Activated CD4-positive, alpha-beta T cell treated with anti-CD3 and anti-CD28 coated beads for 36 hours (primary cell): ENCODE measurements at regions of chr7 and their contacts with region 1.

Region 1: GRCh38 chr7:35723011-35723410 is 28.1 kb upstream of the HERPUD2 start:
- DNase-seq: peak; percentile 33
- ATAC-seq: peak; percentile 80
- H3K4me3 Mint-ChIP-seq: peak overlapping the region; percentile 32
- H3K27ac Mint-ChIP-seq: peak overlapping the region; percentile 90
- H3K4me1 Mint-ChIP-seq: peaks cover 55% of the 10 kb centered on the region
- H3K27me3 Mint-ChIP-seq: no peaks in the 10 kb centered on the region

Region 2: GRCh38 chr7:35701287-35701900 is 21.6 kb before region 1 on chr7:
- CTCF ChIA-PET with region 1: interaction called, 15 read pairs
- POLR2A ChIA-PET with region 1: interaction called, 3 read pairs
- intact Hi-C with region 1: loop called in 1 of 2 experiments (anchors 1 kb)
- DNase-seq: peak; percentile 24
- ATAC-seq: peak; percentile 56
- H3K4me3 Mint-ChIP-seq: no peak overlapping the region
- H3K27ac Mint-ChIP-seq: no peak overlapping the region
- H3K4me1 Mint-ChIP-seq: peaks cover 27% of the 10 kb centered on the region
- H3K27me3 Mint-ChIP-seq: no peaks in the 10 kb centered on the region

Region 3: GRCh38 chr7:35707422-35707821 is 15.6 kb before region 1 on chr7:
- CTCF ChIA-PET with region 1: interaction called, 13 read pairs
- POLR2A ChIA-PET with region 1: interaction called, 3 read pairs
- intact Hi-C with region 1: loop called in 1 of 2 experiments (anchors 2 kb)
- DNase-seq: no peak
- ATAC-seq: no peak
- H3K4me3 Mint-ChIP-seq: no peak overlapping the region
- H3K27ac Mint-ChIP-seq: no peak overlapping the region
- H3K4me1 Mint-ChIP-seq: peaks cover 15% of the 10 kb centered on the region
- H3K27me3 Mint-ChIP-seq: peaks cover 2% of the 10 kb centered on the region

Region 4: DNA sequence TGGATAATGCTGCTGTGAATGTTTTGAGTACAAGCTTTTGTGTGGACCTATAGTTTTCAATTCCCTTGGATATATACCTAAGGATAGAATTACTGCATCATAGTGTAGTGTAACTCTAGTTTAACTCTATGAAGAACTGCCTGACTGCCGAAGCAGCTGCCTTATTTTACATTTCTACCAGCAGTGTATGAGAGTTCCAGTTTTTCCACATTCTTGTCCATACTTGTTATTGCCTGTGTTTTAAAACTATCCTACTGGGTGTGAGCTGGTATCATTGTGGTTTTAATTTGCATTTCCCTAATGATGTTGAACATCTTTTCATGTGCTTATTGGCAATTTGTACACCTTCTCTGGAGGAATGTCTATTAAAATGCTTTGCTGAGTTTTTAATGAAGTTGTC is 93.5 kb after region 1 on chr7:
- CTCF ChIA-PET with region 1: interaction called, 3 read pairs
- POLR2A ChIA-PET with region 1: no interaction called
- intact Hi-C with region 1: loop called in 1 of 2 experiments (anchors 1 kb)
- DNase-seq: no peak
- ATAC-seq: no peak
- H3K4me3 Mint-ChIP-seq: no peak overlapping the region
- H3K27ac Mint-ChIP-seq: no peak overlapping the region
- H3K4me1 Mint-ChIP-seq: peaks cover 76% of the 10 kb centered on the region
- H3K27me3 Mint-ChIP-seq: no peaks in the 10 kb centered on the region